HCT116 (cell line): ENCODE measurements at regions of chr10 and their contacts with region 1.

Region 1: DNA sequence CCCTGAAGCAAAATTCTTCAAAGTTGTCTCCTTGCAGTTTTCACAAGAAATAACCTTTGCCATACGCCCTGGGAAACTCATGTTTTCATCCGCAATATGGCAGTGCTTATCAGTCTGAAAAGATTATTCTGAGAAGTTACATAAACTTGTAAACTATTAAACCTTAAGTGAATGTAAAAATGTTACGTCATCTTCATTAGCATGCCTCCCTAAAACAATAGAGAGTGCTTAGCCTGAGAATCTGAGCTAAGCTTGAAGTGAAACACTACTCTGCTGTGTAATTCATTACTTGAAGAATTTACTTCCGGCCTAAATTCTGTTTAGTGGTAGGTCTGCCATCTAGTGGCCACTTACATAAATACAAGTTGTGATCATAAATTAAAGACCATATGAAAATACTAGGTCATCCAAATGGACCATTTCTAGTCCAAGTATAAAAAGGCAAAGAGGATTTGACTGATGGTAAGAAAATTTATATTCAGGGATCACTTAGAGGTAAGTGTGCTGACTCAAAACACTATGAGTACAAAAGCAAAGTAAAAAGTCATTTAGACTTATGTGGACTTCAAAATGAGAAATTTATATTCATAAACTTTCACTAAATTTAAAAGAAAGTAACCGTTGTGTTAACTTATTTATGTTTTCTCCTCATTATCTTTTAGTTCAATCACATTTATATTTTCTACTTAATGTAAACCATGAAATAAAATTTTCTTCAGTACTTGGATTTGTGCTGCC is 745.1 kb upstream of the LRRTM3 start:
- DNase-seq: peak; percentile 47
- ATAC-seq: peak; percentile 58
- H3K4me3 ChIP-seq: no peak overlapping the region
- H3K27ac ChIP-seq: no peak overlapping the region
- H3K4me1 ChIP-seq: no peaks in the 10 kb centered on the region
- H3K27me3 ChIP-seq: no peaks in the 10 kb centered on the region
- CTCF ChIP-seq: peak; percentile 40 to 69 (median 50); a peak in 5 of 6 replicates
- POLR2A ChIP-seq: no peak
- RAD21 ChIP-seq: peak; percentile 69

Region 2: GRCh38 chr10:64977915-64978314 is 1202.8 kb before region 1 on chr10:
- CTCF ChIA-PET with region 1: no interaction called
- POLR2A ChIA-PET with region 1: no interaction called
- RAD21 ChIA-PET with region 1: no interaction called
- intact Hi-C with region 1: loop called (anchors 5 kb)
- DNase-seq: no peak
- ATAC-seq: no peak
- H3K4me3 ChIP-seq: no peak overlapping the region
- H3K27ac ChIP-seq: no peak overlapping the region
- H3K4me1 ChIP-seq: no peaks in the 10 kb centered on the region
- H3K27me3 ChIP-seq: no peaks in the 10 kb centered on the region
- CTCF ChIP-seq: peak in 1 of 3 experiments; percentile 9; a peak in 2 of 6 replicates
- POLR2A ChIP-seq: no peak
- RAD21 ChIP-seq: peak; percentile 45; the same call in 1 of the 2 replicates

Region 3: GRCh38 chr10:65358565-65358964 is 822.2 kb before region 1 on chr10:
- CTCF ChIA-PET with region 1: interaction called, 4 read pairs
- POLR2A ChIA-PET with region 1: no interaction called
- RAD21 ChIA-PET with region 1: no interaction called
- intact Hi-C with region 1: loop called (anchors 5 kb)
- DNase-seq: peak; percentile 15
- ATAC-seq: peak; percentile 76
- H3K4me3 ChIP-seq: no peak overlapping the region
- H3K27ac ChIP-seq: no peak overlapping the region
- H3K4me1 ChIP-seq: no peaks in the 10 kb centered on the region
- H3K27me3 ChIP-seq: no peaks in the 10 kb centered on the region
- CTCF ChIP-seq: peak; percentile 39 to 66 (median 64); a peak in 5 of 6 replicates
- POLR2A ChIP-seq: no peak
- RAD21 ChIP-seq: peak; percentile 60